ENCODE measurements at regions of chr20 and their contacts with region 1.

Region 1: GRCh38 chr20:51731731-51732095 is 36.5 kb downstream of the ATP9A start:
- DNase-seq: no peak
- H3K4me3 ChIP-seq: no peak overlapping the region
- H3K27ac ChIP-seq: no peak overlapping the region
- H3K4me1 ChIP-seq: peaks cover 20% of the 10 kb centered on the region
- H3K27me3 ChIP-seq: no peaks in the 10 kb centered on the region
- CTCF ChIP-seq: no peak

Region 2: DNA sequence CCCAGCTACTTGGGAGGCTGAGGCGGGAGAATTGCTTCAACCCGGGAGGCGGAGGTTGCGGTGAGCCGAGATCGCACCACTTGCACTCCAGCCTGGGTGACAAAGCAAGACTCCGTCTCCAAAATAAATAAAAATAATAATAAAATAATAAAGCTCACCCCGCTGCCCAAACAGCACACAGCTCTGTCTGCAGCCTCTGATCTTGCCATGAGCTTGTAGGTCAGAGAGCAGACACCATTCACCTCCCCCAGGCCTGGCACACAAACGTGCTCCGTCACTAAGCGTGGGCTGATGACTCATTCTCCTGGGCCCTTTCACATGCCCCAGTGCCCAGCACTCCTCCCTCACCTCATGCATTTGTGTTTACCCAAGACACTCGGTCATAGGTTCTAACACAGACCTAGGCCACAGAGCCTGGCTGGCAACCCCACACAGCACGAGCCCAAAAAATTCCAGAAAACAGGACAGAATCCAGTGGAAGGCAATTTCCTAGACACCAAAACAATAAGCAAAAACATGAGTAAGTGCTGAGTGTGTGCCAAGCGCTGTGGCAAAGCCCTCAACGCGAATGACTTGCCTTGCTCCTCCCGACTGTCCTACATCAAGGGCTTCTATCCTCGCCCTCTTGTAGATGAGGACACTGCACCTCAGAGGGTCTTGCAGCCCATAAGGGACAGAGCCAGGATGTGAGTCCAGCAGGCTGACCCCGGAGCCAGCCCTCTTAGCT is 18.5 kb after region 1 on chr20:
- CTCF ChIA-PET with region 1: interaction called, 10 read pairs
- POLR2A ChIA-PET with region 1: no interaction called
- intact Hi-C with region 1: no loop called
- DNase-seq: peak; percentile 94 to 99
- H3K4me3 ChIP-seq: peak overlapping the region; percentile 44; the same call in 1 of the 2 replicates
- H3K27ac ChIP-seq: peak overlapping the region; percentile 97
- H3K4me1 ChIP-seq: peaks cover 56% of the 10 kb centered on the region
- H3K27me3 ChIP-seq: no peaks in the 10 kb centered on the region
- CTCF ChIP-seq: no peak

Measured in PC-9 (cell line).